Heart left ventricle (tissue), 16 donors: ENCODE measurements at regions of chr6 and their contacts with region 1.

Region 1: DNA sequence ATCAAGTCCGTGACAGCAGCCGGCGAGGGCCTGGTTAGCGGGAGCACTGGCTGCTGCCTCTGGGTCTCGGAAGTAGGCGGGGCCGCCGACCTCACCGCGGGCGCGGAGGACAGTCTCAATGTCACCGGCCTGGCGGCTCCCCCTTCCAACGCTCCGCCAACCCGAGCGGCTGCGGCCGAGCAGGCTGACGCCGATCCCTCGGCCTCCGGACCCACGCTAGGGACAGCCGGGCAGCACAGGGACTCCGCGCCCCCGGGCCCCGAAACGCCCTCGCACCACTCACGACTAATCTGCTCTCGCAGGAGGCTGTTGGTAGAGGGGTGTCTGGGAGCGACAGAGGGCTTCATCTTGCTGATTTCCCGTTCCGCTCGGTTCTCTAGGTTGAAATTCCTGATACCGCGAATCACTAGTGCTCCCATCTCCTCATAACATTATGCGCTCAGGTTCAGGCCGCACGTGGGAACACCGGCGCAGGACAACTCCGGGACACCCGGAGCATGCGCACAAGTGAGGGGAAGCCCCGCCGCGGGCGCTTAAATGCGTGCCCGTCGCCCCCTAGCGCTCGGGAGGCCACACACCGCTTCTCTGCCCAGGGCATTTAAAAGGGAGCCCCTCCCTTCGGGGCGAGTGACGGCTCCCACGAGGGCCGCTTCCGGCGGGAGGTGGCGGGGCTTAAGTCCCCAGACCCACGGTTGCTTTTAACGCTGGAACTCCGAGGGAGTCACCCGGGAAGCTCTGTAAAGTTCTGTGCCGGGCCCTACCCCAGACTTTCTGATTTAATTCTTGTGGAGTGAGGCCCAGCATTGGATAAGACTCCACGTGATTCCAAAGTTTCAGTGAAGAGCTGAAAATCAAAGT is at the start of gene NDUFAF4:
- DNase-seq: peak; percentile 96 to 98 (median 97)
- ATAC-seq: peak; percentile 98 to 99 (median 98)
- H3K4me3 ChIP-seq: peak within 1 kb of the TSS; percentile 72 to 97 (median 92)
- H3K27ac ChIP-seq: peak within 1 kb of the TSS; percentile 91 to 99 (median 96)
- H3K4me1 ChIP-seq: peaks cover 3 to 50% (median 32%) of the 10 kb centered on the region in 12 donors
- H3K27me3 ChIP-seq: no peaks in the 10 kb centered on the region
- CTCF ChIP-seq: peak; percentile 89 to 99 (median 94)
- POLR2A ChIP-seq: peak in 1 of 2 donors; percentile 52
- total RNA-seq, gene NDUFAF4: 59.6 to 107 (median 89.7) TPM

Region 2: GRCh38 chr6:96532399-96532798 is 365.2 kb before region 1 on chr6:
- intact Hi-C with region 1: loop called in 3 of 10 experiments (anchors 5 to 10 kb)
- DNase-seq: no peak
- ATAC-seq: no peak
- H3K4me3 ChIP-seq: no peak overlapping the region
- H3K27ac ChIP-seq: no peak overlapping the region
- H3K4me1 ChIP-seq: no peaks in the 10 kb centered on the region
- H3K27me3 ChIP-seq: no peaks in the 10 kb centered on the region
- CTCF ChIP-seq: no peak
- POLR2A ChIP-seq: no peak

Region 3: DNA sequence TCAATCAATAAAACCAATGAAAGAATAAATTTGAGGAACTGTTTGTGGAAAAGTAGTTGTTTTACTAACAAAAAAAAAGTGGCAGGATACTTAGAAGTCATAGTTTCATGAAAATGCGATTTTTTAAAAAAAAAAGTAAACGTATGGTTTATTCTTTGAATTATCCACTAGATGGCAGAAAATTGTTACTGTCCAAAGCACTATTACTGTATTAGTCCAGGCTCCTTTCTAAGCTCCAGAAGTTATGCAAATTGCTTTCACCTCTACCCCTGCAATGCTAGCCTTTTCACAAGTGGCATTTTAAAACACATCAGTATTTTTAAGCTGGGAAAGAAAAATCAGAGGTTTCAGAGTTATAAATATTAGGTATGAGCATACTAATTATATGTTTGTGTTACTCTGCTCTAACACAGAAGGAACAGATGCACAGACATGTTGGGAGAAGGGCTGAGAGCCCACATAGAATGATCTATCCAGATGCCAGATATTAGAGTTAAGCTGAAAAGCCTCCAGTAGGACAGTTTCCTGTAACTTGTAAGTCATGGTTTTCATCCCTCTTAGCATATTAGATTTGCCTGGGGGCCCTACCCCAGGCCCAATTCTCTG is 270.8 kb before region 1 on chr6:
- intact Hi-C with region 1: loop called in 9 of 10 experiments (anchors 5 to 10 kb)
- DNase-seq: no peak
- ATAC-seq: peak in 3 of 4 donors; percentile 42 to 69 (median 48)
- H3K4me3 ChIP-seq: no peak overlapping the region
- H3K27ac ChIP-seq: no peak overlapping the region
- H3K4me1 ChIP-seq: no peaks in the 10 kb centered on the region
- H3K27me3 ChIP-seq: no peaks in the 10 kb centered on the region
- CTCF ChIP-seq: peak; percentile 19 to 62 (median 42)
- POLR2A ChIP-seq: no peak

Region 4: GRCh38 chr6:96923871-96924493 is 26.4 kb after region 1 on chr6:
- intact Hi-C with region 1: loop called in 1 of 10 experiments (anchors 2 kb)
- DNase-seq: no peak
- ATAC-seq: peak; percentile 63 to 87 (median 79)
- H3K4me3 ChIP-seq: peak overlapping the region; percentile 49 to 75 (median 63)
- H3K27ac ChIP-seq: peak overlapping the region in 11 of 12 donors; percentile 28 to 87 (median 76)
- H3K4me1 ChIP-seq: peaks cover 0 to 15% (median 1%) of the 10 kb centered on the region in 12 donors
- H3K27me3 ChIP-seq: peaks cover 0 to 3% (median 0%) of the 10 kb centered on the region in 9 donors
- CTCF ChIP-seq: no peak
- POLR2A ChIP-seq: no peak

Region 5: DNA sequence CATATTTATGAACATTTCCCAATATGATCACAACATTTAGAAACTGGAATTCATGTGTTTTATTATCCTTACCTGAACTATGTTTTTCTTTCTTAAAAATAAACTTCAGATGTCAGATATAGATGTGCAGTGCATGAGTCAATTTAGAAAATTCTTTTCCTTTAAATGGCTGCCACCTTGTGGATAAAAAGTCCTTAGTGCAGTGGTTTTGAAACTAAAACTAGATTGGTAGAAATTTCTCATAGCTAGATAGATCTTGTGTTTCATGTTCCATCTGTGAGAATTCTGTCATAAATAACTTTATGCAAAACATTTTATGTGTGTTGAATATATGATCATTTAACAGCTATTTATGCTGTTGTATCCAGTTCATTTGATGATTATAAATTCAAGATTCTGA is 161.9 kb after region 1 on chr6:
- intact Hi-C with region 1: loop called in 7 of 10 experiments (anchors 2 to 5 kb)
- DNase-seq: no peak
- ATAC-seq: no peak
- H3K4me3 ChIP-seq: no peak overlapping the region
- H3K27ac ChIP-seq: no peak overlapping the region
- H3K4me1 ChIP-seq: no peaks in the 10 kb centered on the region
- H3K27me3 ChIP-seq: no peaks in the 10 kb centered on the region
- CTCF ChIP-seq: peak; percentile 19 to 63 (median 52)
- POLR2A ChIP-seq: no peak